ENCODE measurements at regions of chr9 and their contacts with region 1.

Region 1: GRCh38 chr9:71683598-71684235 is 84.6 kb downstream of the CEMIP2 start:
- H3K4me3 ChIP-seq: no peak overlapping the region
- H3K27ac ChIP-seq: no peak overlapping the region
- H3K4me1 ChIP-seq: 0 out of 2 replicates have a peak, but pooled peaks cover 3% of the 10 kb centered on the region
- CTCF ChIP-seq: no peak

Region 2: GRCh38 chr9:71768388-71769174 is 84.9 kb after region 1 on chr9 and contains the start of gene CEMIP2:
- CTCF ChIA-PET with region 1: interaction called, 9 read pairs
- POLR2A ChIA-PET with region 1: interaction called, 17 read pairs
- H3K4me3 ChIP-seq: peak within 1 kb of the TSS; percentile 92
- H3K27ac ChIP-seq: peak within 1 kb of the TSS; percentile 88
- H3K4me1 ChIP-seq: no peaks in the 10 kb centered on the region
- CTCF ChIP-seq: no peak

Measured in HEK293 (cell line).